ENCODE measurements at regions of chr15 and their contacts with region 1.

Region 1: DNA sequence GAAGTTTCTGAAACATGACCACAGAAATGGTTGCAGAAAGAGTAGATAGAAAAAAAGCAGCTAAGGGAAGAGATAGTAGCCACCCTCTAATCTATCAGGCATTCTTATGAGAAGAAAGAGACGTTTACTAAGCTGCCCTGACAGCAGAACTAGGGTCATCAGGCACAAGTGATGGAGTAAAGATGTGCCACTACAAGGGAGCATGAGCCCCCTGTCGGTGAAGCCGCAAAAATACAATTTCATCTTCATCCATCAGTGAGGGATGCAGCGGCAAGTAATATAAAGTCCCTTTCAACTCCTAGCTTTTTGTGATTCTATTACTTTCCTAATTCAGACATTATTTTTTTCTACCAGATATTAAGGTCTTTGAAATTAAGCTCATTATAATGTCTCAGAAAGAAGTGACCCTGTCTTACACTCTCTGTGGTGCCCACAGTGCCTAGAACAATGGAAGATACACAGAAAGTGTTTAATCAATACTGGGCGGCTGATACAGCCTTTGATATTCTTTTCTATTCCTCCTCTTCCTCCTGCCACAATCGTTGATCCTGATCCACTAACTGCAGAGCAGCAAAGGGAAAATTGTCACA is 651.6 kb downstream of the NTRK3 start:
- DNase-seq: no peak
- ATAC-seq: no peak
- H3K4me3 ChIP-seq: no peak overlapping the region
- H3K27ac ChIP-seq: no peak overlapping the region
- H3K4me1 ChIP-seq: peaks cover 0 to 10% (median 1%) of the 10 kb centered on the region in 12 donors
- H3K27me3 ChIP-seq: no peaks in the 10 kb centered on the region
- CTCF ChIP-seq: peak; percentile 20 to 57 (median 42)
- POLR2A ChIP-seq: no peak

Region 2: GRCh38 chr15:86935841-86936240 is 669.1 kb before region 1 on chr15:
- intact Hi-C with region 1: no loop called
- DNase-seq: no peak
- ATAC-seq: no peak
- H3K4me3 ChIP-seq: no peak overlapping the region
- H3K27ac ChIP-seq: no peak overlapping the region
- H3K4me1 ChIP-seq: no peaks in the 10 kb centered on the region
- H3K27me3 ChIP-seq: peaks cover 0 to 2% (median 0%) of the 10 kb centered on the region in 9 donors
- CTCF ChIP-seq: no peak
- POLR2A ChIP-seq: no peak

Region 3: DNA sequence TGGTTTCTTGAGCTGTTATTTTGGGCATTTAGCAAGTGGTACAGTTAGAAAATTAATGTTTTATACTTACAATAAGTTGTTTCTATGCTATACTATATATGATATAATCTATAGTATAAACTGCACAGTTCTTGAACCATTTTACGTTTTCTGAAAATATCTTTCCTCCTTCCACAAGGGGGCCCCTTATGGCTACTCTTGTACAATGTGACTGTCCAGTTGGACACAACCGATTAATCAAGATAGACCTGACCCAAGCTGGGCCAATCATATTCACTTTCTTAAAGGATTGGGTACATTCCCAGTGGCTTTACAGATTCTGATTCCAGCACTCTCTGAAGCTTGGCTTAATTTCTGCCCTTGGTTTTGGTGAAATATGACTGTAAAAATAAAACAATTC is 571.9 kb before region 1 on chr15:
- intact Hi-C with region 1: loop called in 1 of 10 experiments (anchors 10 kb)
- DNase-seq: no peak
- ATAC-seq: no peak
- H3K4me3 ChIP-seq: no peak overlapping the region
- H3K27ac ChIP-seq: no peak overlapping the region
- H3K4me1 ChIP-seq: peaks cover 0 to 8% (median 0%) of the 10 kb centered on the region in 12 donors
- H3K27me3 ChIP-seq: no peaks in the 10 kb centered on the region
- CTCF ChIP-seq: peak in 4 of 12 donors; percentile 8 to 21 (median 16)
- POLR2A ChIP-seq: no peak

Region 4: DNA sequence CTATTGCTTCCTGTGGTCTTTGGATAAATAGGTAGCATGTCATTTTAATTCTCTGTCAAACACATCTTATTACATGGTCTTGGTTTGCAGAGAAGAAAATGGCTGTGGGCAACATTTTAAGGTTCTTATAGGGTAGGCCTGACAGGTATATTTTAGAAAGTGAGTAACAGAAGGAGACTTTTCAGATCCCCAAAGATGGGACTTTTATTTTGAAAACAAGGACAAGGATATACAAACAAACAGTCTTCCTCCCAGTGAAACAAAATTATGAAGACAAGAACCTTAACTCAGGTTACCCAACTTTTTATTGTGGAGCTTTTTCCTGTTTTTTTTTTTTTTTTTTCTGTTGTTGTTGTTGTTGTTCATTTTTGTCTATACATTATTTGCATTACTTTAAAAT is 264.6 kb before region 1 on chr15:
- intact Hi-C with region 1: no loop called
- DNase-seq: no peak
- ATAC-seq: no peak
- H3K4me3 ChIP-seq: no peak overlapping the region
- H3K27ac ChIP-seq: no peak overlapping the region
- H3K4me1 ChIP-seq: no peaks in the 10 kb centered on the region
- H3K27me3 ChIP-seq: no peaks in the 10 kb centered on the region
- CTCF ChIP-seq: no peak
- POLR2A ChIP-seq: no peak

Region 5: GRCh38 chr15:87547470-87548181 is 57.3 kb before region 1 on chr15:
- intact Hi-C with region 1: no loop called
- DNase-seq: no peak
- ATAC-seq: peak in 2 of 4 donors; percentile 81 to 82
- H3K4me3 ChIP-seq: no peak overlapping the region
- H3K27ac ChIP-seq: no peak overlapping the region
- H3K4me1 ChIP-seq: peaks cover 0 to 5% (median 0%) of the 10 kb centered on the region in 12 donors
- H3K27me3 ChIP-seq: no peaks in the 10 kb centered on the region
- CTCF ChIP-seq: no peak
- POLR2A ChIP-seq: no peak